Endothelial cell of umbilical vein (primary cell): ENCODE measurements at regions of chr13 and their contacts with region 1.

Region 1: GRCh38 chr13:48412881-48413351 is at the start of gene LPAR6:
- DNase-seq: peak; percentile 88
- H3K4me3 ChIP-seq: peak within 1 kb of the TSS; percentile 74 to 99 (median 76)
- H3K27ac ChIP-seq: peak within 1 kb of the TSS; percentile 95
- H3K4me1 ChIP-seq: peaks cover 17% of the 10 kb centered on the region
- H3K27me3 ChIP-seq: no peaks in the 10 kb centered on the region
- CTCF ChIP-seq: no peak
- POLR2A ChIP-seq: peak; percentile 73
- total RNA-seq, gene LPAR6: 22.3 and 22.9 TPM in 2 replicates

Region 2: DNA sequence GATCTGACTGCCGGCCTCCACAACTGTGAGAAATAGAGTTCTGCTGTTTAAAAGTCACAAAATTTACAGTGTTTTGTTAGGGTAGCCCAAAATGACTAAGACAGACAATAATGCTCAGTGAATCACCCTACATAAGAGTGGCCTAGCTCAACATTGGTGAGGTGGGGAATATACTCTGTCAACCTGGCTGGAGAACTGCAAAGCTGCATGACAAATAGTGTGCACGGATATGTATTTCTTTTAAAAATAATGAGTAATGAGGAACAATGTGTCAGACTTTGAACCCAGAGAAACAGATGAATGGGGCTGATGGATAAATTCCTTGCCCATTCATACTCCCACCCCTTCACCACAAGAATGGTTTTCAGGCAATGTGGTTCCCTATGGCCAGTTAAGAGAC is 784.2 kb before region 1 on chr13:
- CTCF ChIA-PET with region 1: no interaction called
- POLR2A ChIA-PET with region 1: no interaction called
- dilution Hi-C with region 1: no loop called
- intact Hi-C with region 1: no loop called
- DNase-seq: no peak
- H3K4me3 ChIP-seq: no peak overlapping the region
- H3K27ac ChIP-seq: no peak overlapping the region
- H3K4me1 ChIP-seq: no peaks in the 10 kb centered on the region
- H3K27me3 ChIP-seq: no peaks in the 10 kb centered on the region
- CTCF ChIP-seq: no peak
- POLR2A ChIP-seq: no peak

Region 3: GRCh38 chr13:48108106-48108505 is 304.8 kb before region 1 on chr13:
- CTCF ChIA-PET with region 1: no interaction called
- POLR2A ChIA-PET with region 1: no interaction called
- dilution Hi-C with region 1: no loop called
- intact Hi-C with region 1: no loop called
- DNase-seq: peak; percentile 15
- H3K4me3 ChIP-seq: no peak overlapping the region
- H3K27ac ChIP-seq: no peak overlapping the region
- H3K4me1 ChIP-seq: peaks cover 26% of the 10 kb centered on the region
- H3K27me3 ChIP-seq: peaks cover 12 to 21% of the 10 kb centered on the region in 2 experiments
- CTCF ChIP-seq: no peak
- POLR2A ChIP-seq: no peak

Region 4: GRCh38 chr13:48233046-48233907 is 179.6 kb before region 1 on chr13 and contains the start of gene ITM2B:
- CTCF ChIA-PET with region 1: no interaction called
- POLR2A ChIA-PET with region 1: no interaction called
- dilution Hi-C with region 1: no loop called
- intact Hi-C with region 1: loop called (anchors 5 kb)
- DNase-seq: peak; percentile 76
- H3K4me3 ChIP-seq: peak within 1 kb of the TSS; percentile 67 to 95 (median 77)
- H3K27ac ChIP-seq: peak within 1 kb of the TSS; percentile 86
- H3K4me1 ChIP-seq: peaks cover 45% of the 10 kb centered on the region
- H3K27me3 ChIP-seq: peaks cover 2 to 4% of the 10 kb centered on the region in 2 experiments
- CTCF ChIP-seq: peak; percentile 34 to 36
- POLR2A ChIP-seq: peak; percentile 55
- total RNA-seq, gene ITM2B: 245 and 271 TPM in 2 replicates

Region 5: DNA sequence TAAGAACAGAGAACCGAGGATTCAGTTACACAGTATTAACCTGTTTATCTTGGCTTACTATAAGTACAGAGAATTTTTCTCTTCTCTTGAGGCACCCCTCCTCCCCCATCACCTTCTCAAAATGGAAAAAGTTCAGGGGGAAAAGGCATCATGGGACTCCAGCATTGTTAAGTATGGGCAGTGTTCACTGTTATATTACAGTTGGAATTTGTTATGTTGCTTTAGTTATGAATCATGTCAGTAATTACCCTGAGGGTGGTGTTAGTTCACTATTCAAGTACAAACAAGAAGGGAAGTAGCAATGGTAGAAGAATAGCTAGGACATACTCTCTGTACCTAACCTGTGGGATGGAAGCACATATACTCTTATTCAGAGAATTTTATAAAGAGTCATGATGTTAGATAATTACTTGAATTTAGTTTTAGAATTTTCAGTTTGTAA is 12.0 kb before region 1 on chr13:
- CTCF ChIA-PET with region 1: interaction called, 5 read pairs
- POLR2A ChIA-PET with region 1: no interaction called
- dilution Hi-C with region 1: no loop called
- intact Hi-C with region 1: loop called (anchors 1 kb)
- DNase-seq: peak; percentile 96
- H3K4me3 ChIP-seq: peak overlapping the region in 1 of 3 experiments; percentile 26
- H3K27ac ChIP-seq: peak overlapping the region; percentile 75
- H3K4me1 ChIP-seq: peaks cover 44% of the 10 kb centered on the region
- H3K27me3 ChIP-seq: no peaks in the 10 kb centered on the region
- CTCF ChIP-seq: no peak
- POLR2A ChIP-seq: no peak

Region 6: GRCh38 chr13:48448959-48449614 is 36.2 kb after region 1 on chr13:
- CTCF ChIA-PET with region 1: no interaction called
- POLR2A ChIA-PET with region 1: no interaction called
- dilution Hi-C with region 1: no loop called
- intact Hi-C with region 1: loop called (anchors 2 kb)
- DNase-seq: no peak
- H3K4me3 ChIP-seq: peak overlapping the region in 1 of 3 experiments; percentile 23
- H3K27ac ChIP-seq: peak overlapping the region; percentile 3
- H3K4me1 ChIP-seq: peaks cover 41% of the 10 kb centered on the region
- H3K27me3 ChIP-seq: no peaks in the 10 kb centered on the region
- CTCF ChIP-seq: no peak
- POLR2A ChIP-seq: no peak

Region 7: DNA sequence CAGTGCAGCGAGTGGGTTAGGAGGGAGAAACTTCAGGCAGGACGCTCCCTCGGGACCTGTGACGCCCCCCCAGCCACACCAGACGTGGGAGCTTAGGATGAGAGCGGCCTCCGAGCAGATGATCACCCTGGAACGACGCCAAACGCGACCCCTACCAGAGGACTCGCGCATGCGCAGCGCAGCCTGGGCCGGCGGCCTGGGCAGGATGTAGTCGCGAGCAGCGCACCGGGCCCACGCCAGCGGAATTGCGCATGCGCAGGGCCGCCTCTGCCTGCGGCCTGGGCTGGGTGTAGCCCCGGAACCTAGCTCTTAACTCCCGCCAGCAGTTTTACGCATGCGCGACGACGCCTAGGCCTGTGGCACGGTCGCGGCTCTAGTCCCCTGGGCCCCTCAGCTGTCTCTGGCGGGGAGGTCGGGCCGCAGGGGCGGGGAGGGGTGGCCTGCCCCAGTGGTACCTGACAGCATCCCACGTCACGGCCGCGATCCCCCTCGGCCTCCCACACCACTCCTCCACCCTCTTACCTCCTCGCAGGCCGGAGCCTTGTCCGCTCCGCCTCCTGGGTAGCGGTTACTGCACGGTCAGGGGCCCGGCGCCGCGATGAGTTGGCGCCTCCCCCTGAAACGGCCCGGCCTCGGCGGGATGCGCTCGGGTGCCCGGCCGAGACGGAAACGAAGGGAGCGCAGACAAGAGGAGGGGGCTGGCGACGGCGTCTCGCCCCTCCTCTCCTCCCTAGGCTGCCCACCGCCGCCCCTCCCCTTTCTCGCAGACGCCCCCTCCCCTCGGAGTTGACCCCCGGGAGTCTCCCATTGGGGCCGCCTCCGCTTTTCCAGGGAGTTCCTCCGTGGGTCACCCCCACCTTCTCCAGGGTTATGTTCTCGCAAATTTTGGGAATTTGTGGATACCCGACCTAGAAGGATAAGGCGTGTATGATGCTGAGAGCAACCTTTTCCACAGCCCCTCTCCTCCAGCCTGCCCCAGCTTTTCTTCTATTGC is 119.9 kb after region 1 on chr13 and contains the start of gene RCBTB2:
- CTCF ChIA-PET with region 1: no interaction called
- POLR2A ChIA-PET with region 1: no interaction called
- dilution Hi-C with region 1: no loop called
- intact Hi-C with region 1: loop called (anchors 2 kb)
- DNase-seq: peak; percentile 99
- H3K4me3 ChIP-seq: peak within 1 kb of the TSS; percentile 74 to 90 (median 78)
- H3K27ac ChIP-seq: peak within 1 kb of the TSS; percentile 73
- H3K4me1 ChIP-seq: peaks cover 10% of the 10 kb centered on the region
- H3K27me3 ChIP-seq: no peaks in the 10 kb centered on the region
- CTCF ChIP-seq: no peak
- POLR2A ChIP-seq: peak; percentile 95
- total RNA-seq, gene RCBTB2: 9.9 and 12.6 TPM in 2 replicates

Region 8: GRCh38 chr13:48562296-48563066 is 149.6 kb after region 1 on chr13:
- CTCF ChIA-PET with region 1: no interaction called
- POLR2A ChIA-PET with region 1: no interaction called
- dilution Hi-C with region 1: no loop called
- intact Hi-C with region 1: no loop called
- DNase-seq: no peak
- H3K4me3 ChIP-seq: no peak overlapping the region
- H3K27ac ChIP-seq: no peak overlapping the region
- H3K4me1 ChIP-seq: peaks cover 9% of the 10 kb centered on the region
- H3K27me3 ChIP-seq: no peaks in the 10 kb centered on the region
- CTCF ChIP-seq: no peak
- POLR2A ChIP-seq: no peak